Activated CD4-positive, alpha-beta T cell treated with anti-CD3 and anti-CD28 coated beads, Interleukin-2, amount 10 ng/mL, durations not matched to agents 24 days and 14 days (primary cell): ENCODE measurements at regions of chr6 and their contacts with region 1.

Region 1: DNA sequence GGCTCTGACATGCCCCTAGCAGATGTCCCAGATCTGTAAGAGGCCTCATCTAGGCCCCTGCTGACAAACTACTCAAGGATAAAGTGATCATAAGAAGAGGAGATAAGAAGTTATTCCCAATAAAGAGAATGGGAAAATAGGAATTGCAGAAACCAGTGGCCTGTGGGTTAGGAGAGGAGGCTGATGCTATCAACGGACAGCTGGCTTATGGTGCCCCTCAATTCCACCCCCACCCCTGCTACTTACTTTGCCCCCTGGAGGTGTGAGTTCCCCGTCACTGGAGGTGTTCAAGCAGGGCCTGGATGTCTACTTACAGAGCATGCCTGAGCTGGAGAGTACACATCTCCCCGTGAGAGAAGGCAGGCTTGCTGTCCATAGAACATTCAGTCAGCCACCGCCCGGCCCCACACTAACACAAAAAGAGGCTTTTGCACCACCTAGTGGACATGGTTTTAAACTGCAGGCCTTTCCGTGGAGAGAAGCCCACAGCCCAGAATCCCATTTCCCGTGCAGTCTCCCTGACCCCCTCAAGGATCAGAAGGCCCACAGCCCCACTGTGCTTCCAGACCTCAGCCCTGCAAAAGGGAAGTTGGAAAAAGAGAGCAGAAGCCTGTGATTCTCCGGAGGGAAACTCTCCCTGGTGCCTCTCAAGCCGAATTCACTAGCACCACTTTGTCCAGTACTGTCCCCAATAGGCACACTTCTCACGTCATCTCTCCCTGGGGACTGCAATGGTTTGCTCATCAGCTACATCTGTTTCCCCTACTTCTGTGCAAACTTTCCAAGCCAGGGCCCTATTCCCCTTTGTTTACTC is 23.8 kb upstream of the BNIP5 start:
- DNase-seq: peak; percentile 92
- H3K4me3 Mint-ChIP-seq: no peak overlapping the region
- H3K27ac Mint-ChIP-seq: no peak overlapping the region
- H3K4me1 Mint-ChIP-seq: peaks cover 32% of the 10 kb centered on the region
- H3K27me3 Mint-ChIP-seq: peaks cover 18% of the 10 kb centered on the region

Region 2: GRCh38 chr6:36123257-36124139 is 236.9 kb before region 1 on chr6:
- intact Hi-C with region 1: loop called (anchors 1 kb)
- DNase-seq: peak; percentile 97
- H3K4me3 Mint-ChIP-seq: peak overlapping the region; percentile 46
- H3K27ac Mint-ChIP-seq: peak overlapping the region; percentile 79
- H3K4me1 Mint-ChIP-seq: peaks cover 72% of the 10 kb centered on the region
- H3K27me3 Mint-ChIP-seq: no peaks in the 10 kb centered on the region

Region 3: GRCh38 chr6:36131511-36132245 is 228.8 kb before region 1 on chr6:
- intact Hi-C with region 1: loop called (anchors 2 kb)
- DNase-seq: peak; percentile 85
- H3K4me3 Mint-ChIP-seq: peak overlapping the region; percentile 89
- H3K27ac Mint-ChIP-seq: peak overlapping the region; percentile 94
- H3K4me1 Mint-ChIP-seq: peaks cover 44% of the 10 kb centered on the region
- H3K27me3 Mint-ChIP-seq: no peaks in the 10 kb centered on the region

Region 4: DNA sequence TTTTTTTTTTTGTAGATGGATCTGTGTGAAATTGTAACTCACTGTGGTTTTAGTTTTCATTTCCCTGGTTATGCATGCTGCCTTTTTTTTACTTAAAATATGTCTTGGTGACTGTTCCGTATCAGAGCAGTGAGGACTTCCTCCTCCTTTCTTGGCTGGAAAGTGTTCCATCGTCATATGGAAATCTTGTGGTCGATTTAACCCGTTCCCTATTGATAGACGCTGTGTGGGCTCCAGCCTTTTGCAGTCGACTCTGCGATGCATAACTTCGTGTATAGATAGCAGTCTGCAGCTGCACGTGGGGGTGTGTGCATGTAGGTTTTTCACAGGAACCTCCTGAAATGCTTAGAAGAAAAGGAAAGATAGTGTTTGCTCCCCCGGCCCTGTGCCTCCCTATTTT is 118.7 kb before region 1 on chr6:
- intact Hi-C with region 1: loop called (anchors 1 kb)
- DNase-seq: no peak
- H3K4me3 Mint-ChIP-seq: peak overlapping the region; percentile 36
- H3K27ac Mint-ChIP-seq: no peak overlapping the region
- H3K4me1 Mint-ChIP-seq: peaks cover 12% of the 10 kb centered on the region
- H3K27me3 Mint-ChIP-seq: peaks cover 34% of the 10 kb centered on the region

Region 5: GRCh38 chr6:36302227-36302976 is 58.0 kb before region 1 on chr6:
- intact Hi-C with region 1: loop called (anchors 1 kb)
- DNase-seq: peak; percentile 97
- H3K4me3 Mint-ChIP-seq: no peak overlapping the region
- H3K27ac Mint-ChIP-seq: no peak overlapping the region
- H3K4me1 Mint-ChIP-seq: peaks cover 3% of the 10 kb centered on the region
- H3K27me3 Mint-ChIP-seq: peaks cover 21% of the 10 kb centered on the region

Region 6: GRCh38 chr6:36340618-36341454 is 19.6 kb before region 1 on chr6:
- intact Hi-C with region 1: loop called (anchors 1 kb)
- DNase-seq: peak; percentile 92
- H3K4me3 Mint-ChIP-seq: peak overlapping the region; percentile 23
- H3K27ac Mint-ChIP-seq: no peak overlapping the region
- H3K4me1 Mint-ChIP-seq: peaks cover 14% of the 10 kb centered on the region
- H3K27me3 Mint-ChIP-seq: peaks cover 35% of the 10 kb centered on the region